Caco-2 (cell line): ENCODE measurements at regions of chr11 and their contacts with region 1.

Region 1: GRCh38 chr11:129410395-129410960 is 34.8 kb downstream of the BARX2 start:
- DNase-seq: peak; percentile 59 to 65
- H3K4me3 ChIP-seq: no peak overlapping the region
- H3K4me3 Mint-ChIP-seq: no peak overlapping the region
- H3K27ac Mint-ChIP-seq: no peak overlapping the region
- H3K4me1 ChIP-seq: peaks cover 10% of the 10 kb centered on the region; the same call in 1 of the 2 replicates
- H3K4me1 Mint-ChIP-seq: peaks cover 14% of the 10 kb centered on the region
- H3K27me3 ChIP-seq: no peaks in the 10 kb centered on the region
- H3K27me3 Mint-ChIP-seq: no peaks in the 10 kb centered on the region
- CTCF ChIP-seq: peak; percentile 56 to 74

Region 2: DNA sequence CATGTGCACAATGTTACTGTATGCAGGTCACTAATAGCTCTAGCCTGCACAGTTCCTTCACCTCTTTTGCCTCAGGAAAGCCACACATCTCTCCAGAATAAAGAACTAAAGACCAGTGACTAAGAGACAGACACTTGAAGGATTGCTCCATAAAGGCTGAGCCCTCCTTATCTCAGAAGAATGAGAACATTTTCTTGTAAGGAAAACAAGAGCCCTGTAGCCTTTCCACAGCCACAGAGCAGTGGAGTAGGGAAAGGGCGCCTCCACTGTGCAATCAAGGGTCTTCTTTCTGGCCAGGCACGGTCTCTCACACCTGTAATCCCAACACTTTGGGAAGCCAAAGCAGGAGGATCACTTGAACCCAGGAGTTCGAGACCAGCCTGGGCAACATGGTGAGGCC is 202.6 kb after region 1 on chr11:
- CTCF ChIA-PET with region 1: no interaction called
- POLR2A ChIA-PET with region 1: no interaction called
- intact Hi-C with region 1: loop called (anchors 1 kb)
- DNase-seq: no peak
- H3K4me3 ChIP-seq: no peak overlapping the region
- H3K4me3 Mint-ChIP-seq: no peak overlapping the region
- H3K27ac Mint-ChIP-seq: no peak overlapping the region
- H3K4me1 ChIP-seq: no peaks in the 10 kb centered on the region
- H3K4me1 Mint-ChIP-seq: no peaks in the 10 kb centered on the region
- H3K27me3 ChIP-seq: no peaks in the 10 kb centered on the region
- H3K27me3 Mint-ChIP-seq: no peaks in the 10 kb centered on the region
- CTCF ChIP-seq: no peak